Activated naive CD4-positive, alpha-beta T cell treated with anti-CD3 and anti-CD28 coated beads for 36 hours (primary cell): ENCODE measurements at regions of chr19 and their contacts with region 1.

Region 1: DNA sequence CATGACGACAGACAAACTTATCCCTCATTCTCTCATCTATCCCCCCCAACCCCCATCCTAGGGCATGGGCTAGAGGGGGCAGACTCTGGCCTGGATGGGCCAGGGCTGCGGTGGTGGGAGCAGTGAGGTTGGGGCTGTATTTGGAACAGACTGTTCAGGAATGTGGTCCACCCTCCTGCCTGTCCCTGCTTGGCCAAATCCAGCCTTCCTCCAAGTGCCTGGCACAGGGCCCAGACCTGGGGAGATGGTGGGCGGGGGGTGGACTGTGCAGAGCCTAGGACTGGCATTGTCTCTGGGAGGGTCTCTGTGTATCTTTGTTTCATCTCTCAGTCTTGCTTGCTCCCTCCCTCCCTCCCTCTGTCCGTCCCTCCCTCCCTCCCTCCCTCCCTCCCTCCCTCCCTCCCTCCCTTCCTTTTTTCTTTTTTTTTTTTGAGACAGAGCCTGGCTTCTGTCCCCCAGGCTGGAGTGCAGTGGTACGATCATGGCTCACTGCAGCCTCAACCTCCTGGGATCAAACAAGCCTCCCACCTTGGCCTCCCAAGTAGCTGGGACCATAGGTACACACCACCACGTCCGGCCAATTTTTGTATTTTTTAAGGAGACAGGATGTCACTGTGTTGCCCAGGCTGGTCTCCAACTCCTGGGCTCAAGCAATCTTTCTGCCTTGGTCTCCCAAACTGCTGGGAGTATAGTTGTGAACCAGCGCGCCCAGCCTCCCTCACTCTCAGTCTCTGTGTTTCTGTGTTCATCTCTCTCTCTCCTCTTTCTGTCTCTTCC is 14.4 kb downstream of the EGLN2 start:
- DNase-seq: no peak
- H3K4me3 Mint-ChIP-seq: no peak overlapping the region
- H3K27ac Mint-ChIP-seq: no peak overlapping the region
- H3K4me1 Mint-ChIP-seq: peaks cover 35% of the 10 kb centered on the region
- H3K27me3 Mint-ChIP-seq: no peaks in the 10 kb centered on the region

Region 2: DNA sequence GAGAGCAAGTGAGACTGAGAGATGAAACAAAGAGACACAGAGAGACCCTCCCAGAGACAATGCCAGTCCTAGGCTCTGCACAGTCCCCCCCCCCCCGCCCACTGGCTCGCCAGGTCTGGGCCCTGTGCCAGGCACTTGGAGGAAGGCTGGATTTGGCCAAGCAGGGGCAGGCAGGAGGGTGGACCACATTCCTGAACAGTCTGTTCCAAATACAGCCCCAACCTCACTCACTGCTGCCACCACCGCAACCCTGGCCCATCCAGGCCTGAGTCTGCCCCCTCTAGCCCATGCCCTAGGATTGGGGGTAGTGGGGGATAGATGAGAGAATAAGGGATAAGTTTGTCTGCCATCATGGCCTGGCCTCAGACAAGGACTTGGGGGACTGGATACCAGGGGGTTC is 319.9 kb after region 1 on chr19:
- CTCF ChIA-PET with region 1: no interaction called
- intact Hi-C with region 1: loop called (anchors 2 kb)
- DNase-seq: no peak
- H3K4me3 Mint-ChIP-seq: no peak overlapping the region
- H3K27ac Mint-ChIP-seq: no peak overlapping the region
- H3K4me1 Mint-ChIP-seq: peaks cover 9% of the 10 kb centered on the region
- H3K27me3 Mint-ChIP-seq: no peaks in the 10 kb centered on the region